HepG2 (cell line): ENCODE measurements at regions of chr17 and their contacts with region 1.

Region 1: DNA sequence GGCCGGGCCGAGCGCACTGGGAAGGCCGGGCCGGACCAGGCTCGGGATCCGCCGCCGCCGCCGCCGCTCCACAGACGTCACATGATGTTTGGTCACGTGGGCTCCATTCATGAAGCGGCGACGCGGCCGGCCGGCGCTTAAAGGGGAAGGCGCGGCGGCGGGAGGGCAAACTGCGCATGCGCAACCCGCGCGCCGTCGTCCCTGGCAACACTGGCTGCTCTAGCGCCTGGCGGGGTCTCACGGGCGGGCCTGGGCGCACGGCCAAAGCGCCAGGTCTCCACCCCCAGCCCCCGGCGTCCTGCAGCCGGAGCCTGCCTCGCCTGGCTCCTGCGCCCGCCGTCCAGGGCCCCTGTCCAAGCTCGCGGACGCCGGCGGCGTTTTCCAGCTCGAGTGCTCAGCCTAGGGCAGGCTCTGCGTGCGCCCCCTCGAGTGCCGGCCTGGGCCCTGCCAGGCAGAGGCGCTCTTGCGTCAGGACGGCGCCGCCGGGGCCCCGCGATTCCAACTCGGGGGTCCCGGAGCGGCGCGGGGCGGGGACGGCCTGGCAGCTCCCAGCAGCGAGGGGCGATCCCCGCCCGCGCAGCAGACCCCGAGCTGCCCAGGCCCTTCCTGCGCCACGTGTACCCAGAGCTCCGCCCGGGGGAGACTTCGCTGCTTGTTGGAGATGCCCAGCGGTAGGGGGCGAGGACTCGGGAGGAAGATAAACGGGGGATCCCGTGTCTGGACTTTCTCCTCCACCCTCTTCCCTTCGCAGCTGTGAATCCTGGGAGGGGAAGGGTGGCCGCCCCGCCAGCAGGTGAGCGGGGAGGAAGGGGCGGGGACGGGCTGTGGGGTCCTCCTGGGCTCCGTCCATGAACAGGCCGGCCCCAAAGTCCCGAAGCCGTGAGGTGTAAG is at the start of gene MAFG:
- DNase-seq: peak; percentile 94
- ATAC-seq: peak; percentile 46
- H3K4me3 ChIP-seq: peak within 1 kb of the TSS; percentile 79 to 94 (median 91)
- H3K27ac ChIP-seq: peak within 1 kb of the TSS; percentile 92
- H3K4me1 ChIP-seq: peaks cover 64% of the 10 kb centered on the region
- H3K27me3 ChIP-seq: no peaks in the 10 kb centered on the region
- CTCF ChIP-seq: peak; percentile 73
- EP300 ChIP-seq: 0 out of 4 replicates have a peak, but pooled peaks of 1 of the 2 experiments have one; percentile 11
- POLR2A ChIP-seq: peak in 1 of 2 experiments; percentile 31; a peak in 1 of 4 replicates
- RAD21 ChIP-seq: peak; percentile 85
- total RNA-seq, gene MAFG: 12.4 and 14.5 TPM in 2 replicates

Region 2: DNA sequence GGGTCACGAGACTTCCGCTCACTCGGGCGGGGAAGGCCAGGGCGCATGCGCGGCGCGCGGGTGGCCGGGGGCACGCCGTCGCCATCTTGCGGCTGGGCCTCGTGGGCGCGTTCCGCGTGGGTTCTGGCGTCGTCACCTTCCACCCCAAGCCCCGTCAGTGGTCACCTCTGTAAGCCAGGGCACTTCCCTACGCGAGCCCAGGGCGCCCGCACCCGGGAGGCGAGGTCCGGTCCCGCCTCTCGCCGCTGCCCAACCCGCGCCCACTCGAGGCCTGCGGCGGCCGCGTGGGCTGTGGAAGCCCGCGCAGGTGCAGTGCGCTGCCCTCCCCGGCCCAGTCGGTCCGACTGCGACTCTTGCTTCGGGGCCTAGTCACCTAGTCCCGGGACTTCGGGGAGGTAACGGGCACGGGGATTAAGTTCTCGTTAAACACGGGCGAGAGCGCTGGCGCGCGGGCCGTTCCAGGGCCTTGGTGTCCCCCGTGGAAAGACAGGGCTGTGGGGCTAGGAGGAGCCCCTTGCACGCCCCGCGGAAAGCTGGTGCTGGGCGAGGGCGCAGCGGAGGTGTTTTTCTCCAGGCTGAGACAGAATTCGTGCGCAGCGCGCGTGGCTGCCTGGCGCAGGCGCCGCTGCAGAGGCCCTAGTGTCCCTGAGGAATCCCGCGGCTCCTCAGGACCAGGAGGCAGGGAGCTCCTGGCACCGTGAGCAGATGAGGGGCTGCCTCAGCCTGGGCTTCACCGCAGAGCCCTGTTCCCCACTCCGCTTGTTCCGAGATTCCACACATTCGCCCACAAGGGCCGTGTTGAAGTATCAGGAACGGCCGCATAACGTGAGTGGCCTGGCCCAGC is 56.3 kb before region 1 on chr17:
- CTCF ChIA-PET with region 1: no interaction called
- POLR2A ChIA-PET with region 1: interaction called, 11 read pairs
- in situ Hi-C with region 1: no loop called
- intact Hi-C with region 1: no loop called
- DNase-seq: peak; percentile 86
- ATAC-seq: no peak; the same call in 2 of the 3 replicates
- H3K4me3 ChIP-seq: peak overlapping the region; percentile 65 to 92 (median 90)
- H3K27ac ChIP-seq: peak overlapping the region; percentile 98
- H3K4me1 ChIP-seq: peaks cover 52% of the 10 kb centered on the region
- H3K27me3 ChIP-seq: no peaks in the 10 kb centered on the region
- CTCF ChIP-seq: peak; percentile 74
- EP300 ChIP-seq: no peak; a peak in 1 of 4 replicates
- POLR2A ChIP-seq: peak in 1 of 2 experiments; percentile 58; a peak in 2 of 4 replicates
- RAD21 ChIP-seq: peak; percentile 81

Region 3: DNA sequence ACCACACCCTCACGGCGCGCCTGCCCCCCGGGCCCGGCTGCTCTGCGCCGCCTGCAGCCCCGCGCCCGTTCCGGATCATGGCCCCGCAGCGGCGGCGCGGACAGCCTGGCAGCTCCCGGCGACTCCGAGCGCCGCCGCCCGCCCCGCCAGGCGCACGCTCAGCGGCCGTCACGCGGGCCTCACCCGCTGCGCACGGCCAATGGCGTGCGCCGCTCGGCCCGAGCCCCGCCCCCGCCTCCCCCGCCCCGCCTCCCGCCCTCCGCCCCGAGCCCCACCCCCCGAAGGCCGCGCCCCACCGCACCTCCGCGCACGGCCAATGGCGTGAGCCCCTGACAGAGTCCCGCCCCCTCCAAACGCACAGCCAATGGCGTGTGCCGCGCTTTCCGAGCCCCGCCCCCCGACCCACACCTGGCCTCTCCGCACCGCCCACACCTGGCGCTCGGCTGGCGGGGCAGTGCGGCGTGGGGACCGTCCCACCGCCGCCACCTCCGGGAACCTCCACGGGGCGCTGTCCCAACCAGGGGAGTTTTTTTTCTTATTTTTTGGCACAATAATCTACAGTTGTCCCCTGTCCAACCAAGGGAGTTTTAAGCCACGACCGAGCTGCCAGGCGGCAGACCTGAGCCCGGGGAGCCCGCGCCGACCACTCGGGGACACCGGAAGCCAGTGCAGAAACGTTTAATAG is 16.5 kb before region 1 on chr17 and contains the start of gene PCYT2:
- CTCF ChIA-PET with region 1: no interaction called
- POLR2A ChIA-PET with region 1: interaction called, 52 read pairs
- in situ Hi-C with region 1: no loop called
- intact Hi-C with region 1: loop called (anchors 2 kb)
- DNase-seq: peak; percentile 87
- ATAC-seq: peak; percentile 72
- H3K4me3 ChIP-seq: peak within 1 kb of the TSS; percentile 68 to 99 (median 97)
- H3K27ac ChIP-seq: peak within 1 kb of the TSS; percentile 99
- H3K4me1 ChIP-seq: peaks cover 46% of the 10 kb centered on the region
- H3K27me3 ChIP-seq: no peaks in the 10 kb centered on the region; a peak in 1 of 5 replicates
- CTCF ChIP-seq: peak; percentile 47
- EP300 ChIP-seq: 0 out of 4 replicates have a peak, but pooled peaks of 1 of the 2 experiments have one; percentile 3
- POLR2A ChIP-seq: peak in 1 of 2 experiments; percentile 30; a peak in 1 of 4 replicates
- RAD21 ChIP-seq: no peak; the same call in 1 of the 2 replicates
- total RNA-seq, gene PCYT2: 240 and 297 TPM in 2 replicates

Region 4: DNA sequence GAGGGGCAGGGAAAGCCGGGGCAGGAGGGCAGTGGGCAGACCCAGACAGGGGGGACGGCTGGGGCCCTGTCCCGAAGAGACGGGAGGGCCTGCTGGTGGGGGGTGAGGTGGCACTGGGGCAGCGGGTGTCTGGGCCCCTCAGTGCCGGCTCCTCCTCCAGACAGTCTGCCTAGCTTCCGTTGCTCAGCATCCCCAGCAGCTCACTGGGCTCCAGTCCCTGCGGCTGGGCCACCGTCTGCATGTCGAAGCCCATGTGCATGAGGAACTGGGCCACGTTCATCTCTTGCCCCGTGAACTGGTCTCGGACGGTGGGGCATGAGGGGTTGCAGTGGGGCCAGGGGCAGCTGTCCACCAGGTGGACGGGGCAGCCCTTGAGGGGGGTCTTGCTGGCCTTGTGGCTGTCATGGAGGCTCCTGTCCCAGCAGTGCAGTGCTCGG is 24.9 kb after region 1 on chr17:
- CTCF ChIA-PET with region 1: no interaction called
- POLR2A ChIA-PET with region 1: interaction called, 32 read pairs
- in situ Hi-C with region 1: no loop called
- intact Hi-C with region 1: no loop called
- DNase-seq: no peak
- ATAC-seq: peak; percentile 11
- H3K4me3 ChIP-seq: no peak overlapping the region
- H3K27ac ChIP-seq: peak overlapping the region; percentile 24
- H3K4me1 ChIP-seq: peaks cover 63% of the 10 kb centered on the region
- H3K27me3 ChIP-seq: no peaks in the 10 kb centered on the region
- CTCF ChIP-seq: no peak
- EP300 ChIP-seq: no peak
- POLR2A ChIP-seq: no peak; a peak in 1 of 4 replicates
- RAD21 ChIP-seq: no peak

Region 5: GRCh38 chr17:81967533-81968395 is 39.9 kb after region 1 on chr17:
- CTCF ChIA-PET with region 1: no interaction called
- POLR2A ChIA-PET with region 1: interaction called, 13 read pairs
- in situ Hi-C with region 1: no loop called
- intact Hi-C with region 1: no loop called
- DNase-seq: peak; percentile 98
- ATAC-seq: peak; percentile 79
- H3K4me3 ChIP-seq: peak overlapping the region; percentile 44 to 74 (median 48)
- H3K27ac ChIP-seq: peak overlapping the region; percentile 75
- H3K4me1 ChIP-seq: peaks cover 70% of the 10 kb centered on the region
- H3K27me3 ChIP-seq: no peaks in the 10 kb centered on the region
- CTCF ChIP-seq: peak; percentile 49
- EP300 ChIP-seq: peak in 1 of 2 experiments; percentile 90; a peak in 3 of 4 replicates
- POLR2A ChIP-seq: peak in 1 of 2 experiments; percentile 41; a peak in 1 of 4 replicates
- RAD21 ChIP-seq: 0 out of 2 replicates have a peak, but pooled peaks have one; percentile 14

Region 6: GRCh38 chr17:82051776-82052637 is 124.1 kb after region 1 on chr17 and contains the starts of genes GPS1 and RFNG:
- CTCF ChIA-PET with region 1: no interaction called
- POLR2A ChIA-PET with region 1: no interaction called
- in situ Hi-C with region 1: no loop called
- intact Hi-C with region 1: no loop called
- DNase-seq: peak; percentile 60
- ATAC-seq: peak; percentile 49
- H3K4me3 ChIP-seq: peak within 1 kb of the TSS; percentile 76 to 99 (median 95)
- H3K27ac ChIP-seq: peak within 1 kb of the TSS; percentile 71
- H3K4me1 ChIP-seq: peaks cover 50% of the 10 kb centered on the region
- H3K27me3 ChIP-seq: no peaks in the 10 kb centered on the region; a peak in 2 of 5 replicates
- CTCF ChIP-seq: no peak
- EP300 ChIP-seq: no peak
- POLR2A ChIP-seq: no peak
- RAD21 ChIP-seq: peak; percentile 54; the same call in 1 of the 2 replicates
- total RNA-seq, gene GPS1: 106 and 124 TPM in 2 replicates
- total RNA-seq, gene RFNG: 27.8 and 64.0 TPM in 2 replicates